MCF 10A (cell line): ENCODE measurements at regions of chr1 and their contacts with region 1.

Region 1: GRCh38 chr1:214454619-214455396 is 96.6 kb downstream of the PTPN14 start:
- DNase-seq: peak; percentile 60
- H3K4me3 Mint-ChIP-seq: no peak overlapping the region
- H3K27ac Mint-ChIP-seq: peak overlapping the region; percentile 42
- H3K4me1 Mint-ChIP-seq: peaks cover 66% of the 10 kb centered on the region
- H3K27me3 Mint-ChIP-seq: no peaks in the 10 kb centered on the region
- CTCF ChIP-seq: no peak

Region 2: GRCh38 chr1:214391873-214392645 is 62.7 kb before region 1 on chr1:
- CTCF ChIA-PET with region 1: interaction called, 17 read pairs
- POLR2A ChIA-PET with region 1: interaction called, 6 read pairs
- intact Hi-C with region 1: no loop called
- DNase-seq: no peak
- H3K4me3 Mint-ChIP-seq: no peak overlapping the region
- H3K27ac Mint-ChIP-seq: no peak overlapping the region
- H3K4me1 Mint-ChIP-seq: peaks cover 16% of the 10 kb centered on the region
- H3K27me3 Mint-ChIP-seq: no peaks in the 10 kb centered on the region
- CTCF ChIP-seq: no peak

Region 3: DNA sequence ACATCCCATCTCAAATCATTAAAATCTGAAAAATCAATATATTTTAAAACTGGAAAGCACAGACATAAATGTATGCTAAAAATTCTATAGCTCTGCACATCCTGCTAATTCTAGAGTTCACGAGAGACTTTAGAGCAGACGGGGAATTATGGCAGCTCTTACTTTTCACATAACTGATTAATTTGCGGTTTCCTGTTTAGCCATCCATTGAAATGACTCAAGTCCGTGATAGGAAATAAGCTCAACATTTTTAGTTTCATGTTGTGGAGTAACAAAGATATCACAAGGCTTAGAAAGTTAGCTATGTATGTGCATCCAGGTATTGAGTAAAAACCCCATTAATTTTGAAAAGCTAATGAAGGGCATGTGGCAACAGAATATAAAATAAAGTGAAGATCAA is 50.7 kb before region 1 on chr1:
- CTCF ChIA-PET with region 1: interaction called, 18 read pairs
- POLR2A ChIA-PET with region 1: interaction called, 5 read pairs
- intact Hi-C with region 1: no loop called
- DNase-seq: peak; percentile 40
- H3K4me3 Mint-ChIP-seq: no peak overlapping the region
- H3K27ac Mint-ChIP-seq: peak overlapping the region; percentile 20
- H3K4me1 Mint-ChIP-seq: peaks cover 24% of the 10 kb centered on the region
- H3K27me3 Mint-ChIP-seq: no peaks in the 10 kb centered on the region
- CTCF ChIP-seq: no peak

Region 4: DNA sequence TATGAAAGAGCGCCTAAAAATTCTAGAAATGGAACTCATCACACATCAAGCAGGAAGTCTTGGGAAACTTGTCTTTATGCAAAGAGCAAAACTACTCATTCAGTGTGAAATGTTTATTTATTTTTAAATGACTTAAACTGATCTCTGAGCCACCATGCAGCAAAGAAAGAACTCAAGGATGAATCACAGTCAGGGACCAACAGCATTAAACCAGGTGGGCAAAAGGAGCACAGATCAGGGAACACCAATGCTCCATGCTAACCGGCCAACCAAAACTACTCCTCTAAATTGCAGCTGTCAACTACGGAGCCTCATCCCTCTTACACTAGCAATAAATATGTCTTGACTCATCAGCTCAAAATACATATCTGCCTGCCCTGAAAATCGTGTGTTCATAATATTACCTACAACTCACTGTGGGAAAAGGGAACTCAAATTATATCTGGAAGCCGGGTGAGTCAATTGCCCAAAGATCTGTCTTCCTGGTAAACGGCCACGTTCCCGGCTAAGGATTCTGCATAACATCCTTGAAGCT is 32.6 kb before region 1 on chr1:
- CTCF ChIA-PET with region 1: interaction called, 16 read pairs
- POLR2A ChIA-PET with region 1: interaction called, 43 read pairs
- intact Hi-C with region 1: no loop called
- DNase-seq: peak; percentile 84
- H3K4me3 Mint-ChIP-seq: peak overlapping the region; percentile 6
- H3K27ac Mint-ChIP-seq: peak overlapping the region; percentile 80
- H3K4me1 Mint-ChIP-seq: peaks cover 77% of the 10 kb centered on the region
- H3K27me3 Mint-ChIP-seq: no peaks in the 10 kb centered on the region
- CTCF ChIP-seq: no peak

Region 5: GRCh38 chr1:214427871-214428277 is 26.9 kb before region 1 on chr1:
- CTCF ChIA-PET with region 1: interaction called, 4 read pairs
- POLR2A ChIA-PET with region 1: interaction called, 35 read pairs
- intact Hi-C with region 1: no loop called
- DNase-seq: peak; percentile 97
- H3K4me3 Mint-ChIP-seq: peak overlapping the region; percentile 15
- H3K27ac Mint-ChIP-seq: peak overlapping the region; percentile 82
- H3K4me1 Mint-ChIP-seq: peaks cover 63% of the 10 kb centered on the region
- H3K27me3 Mint-ChIP-seq: no peaks in the 10 kb centered on the region
- CTCF ChIP-seq: no peak

Region 6: GRCh38 chr1:214466403-214467077 is 11.7 kb after region 1 on chr1:
- CTCF ChIA-PET with region 1: interaction called, 61 read pairs
- POLR2A ChIA-PET with region 1: interaction called, 843 read pairs
- intact Hi-C with region 1: no loop called
- DNase-seq: peak; percentile 54
- H3K4me3 Mint-ChIP-seq: peak overlapping the region; percentile 37
- H3K27ac Mint-ChIP-seq: peak overlapping the region; percentile 88
- H3K4me1 Mint-ChIP-seq: peaks cover 65% of the 10 kb centered on the region
- H3K27me3 Mint-ChIP-seq: no peaks in the 10 kb centered on the region
- CTCF ChIP-seq: no peak